ENCODE measurements at regions of chr17 and their contacts with region 1.

Region 1: DNA sequence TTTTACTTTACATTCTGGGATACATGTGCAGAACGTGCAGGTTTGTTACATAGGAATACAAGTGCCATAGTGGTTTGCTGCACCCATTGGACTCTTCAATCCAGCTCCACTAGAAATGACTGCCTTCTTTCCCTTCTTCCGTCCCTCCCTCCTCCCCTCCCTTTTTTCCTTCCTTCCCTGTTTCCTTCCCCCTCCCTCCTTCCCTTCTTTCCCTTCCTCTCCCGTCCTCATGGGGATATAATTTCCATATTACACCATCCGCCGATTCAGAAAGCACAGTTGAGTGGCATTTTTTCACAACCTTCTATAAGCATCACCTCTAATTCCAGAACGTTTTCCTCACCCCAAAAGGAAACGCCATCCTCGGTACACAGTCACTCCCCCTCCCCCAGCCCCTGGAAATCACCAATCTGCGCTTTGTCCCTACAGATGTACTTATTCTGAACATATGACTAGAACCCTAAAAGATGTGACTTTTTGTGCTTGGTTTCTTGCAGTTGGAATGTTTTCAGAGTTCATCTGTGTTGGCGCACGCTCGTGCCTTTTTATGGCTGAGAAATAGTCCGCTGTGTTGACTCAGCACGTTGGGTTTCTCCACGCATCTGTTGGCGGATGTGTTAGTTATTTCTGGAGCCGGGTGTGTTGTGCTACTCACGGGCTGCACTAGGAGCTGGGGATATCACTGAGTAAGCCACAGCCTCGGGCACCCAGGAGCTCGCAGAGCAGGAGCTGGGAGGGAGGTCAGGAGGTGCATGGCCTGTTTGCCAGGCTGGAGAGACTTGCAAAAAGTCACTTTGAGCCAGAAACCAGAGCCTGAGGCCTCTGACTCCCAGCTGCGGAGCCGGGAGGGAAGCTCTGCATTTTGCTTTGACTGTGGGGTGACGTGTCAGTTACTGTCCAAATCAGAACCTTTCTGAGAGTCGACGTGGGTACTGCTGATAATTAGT is 336.4 kb downstream of the SEC14L1 start:
- DNase-seq: peak in 2 of 9 experiments; percentile 50 to 58
- ATAC-seq: peak; percentile 21
- H3K4me3 ChIP-seq: no peak overlapping the region
- H3K4me3 Mint-ChIP-seq: peak overlapping the region; percentile 54
- H3K27ac ChIP-seq: peak overlapping the region in 1 of 2 experiments; percentile 11
- H3K27ac Mint-ChIP-seq: peak overlapping the region; percentile 99
- H3K4me1 ChIP-seq: peaks cover 98% of the 10 kb centered on the region
- H3K4me1 Mint-ChIP-seq: peaks cover 86% of the 10 kb centered on the region
- H3K27me3 ChIP-seq: no peaks in the 10 kb centered on the region
- H3K27me3 Mint-ChIP-seq: no peaks in the 10 kb centered on the region
- CTCF ChIP-seq: no peak

Region 2: GRCh38 chr17:77465358-77466041 is 11.7 kb before region 1 on chr17:
- CTCF ChIA-PET with region 1: interaction called, 6 read pairs
- POLR2A ChIA-PET with region 1: interaction called, 23 read pairs
- intact Hi-C with region 1: loop called (anchors 1 kb)
- DNase-seq: peak; percentile 58 to 93 (median 82)
- ATAC-seq: peak; percentile 91
- H3K4me3 ChIP-seq: peak overlapping the region; percentile 29 to 51
- H3K4me3 Mint-ChIP-seq: peak overlapping the region; percentile 71
- H3K27ac ChIP-seq: peak overlapping the region; percentile 28 to 68
- H3K27ac Mint-ChIP-seq: peak overlapping the region; percentile 94
- H3K4me1 ChIP-seq: peaks cover 94% of the 10 kb centered on the region
- H3K4me1 Mint-ChIP-seq: peaks cover 87% of the 10 kb centered on the region
- H3K27me3 ChIP-seq: no peaks in the 10 kb centered on the region
- H3K27me3 Mint-ChIP-seq: no peaks in the 10 kb centered on the region
- CTCF ChIP-seq: no peak